Left ventricle myocardium inferior (tissue), 1 donor: ENCODE measurements at regions of chr20 and their contacts with region 1.

Region 1: GRCh38 chr20:57380081-57380881 is 10.9 kb upstream of the RBM38 start:
- DNase-seq: no peak
- H3K4me3 ChIP-seq: no peak overlapping the region
- H3K27ac ChIP-seq: no peak overlapping the region
- H3K4me1 ChIP-seq: peaks cover 19% of the 10 kb centered on the region
- H3K27me3 ChIP-seq: no peaks in the 10 kb centered on the region
- CTCF ChIP-seq: no peak

Region 2: DNA sequence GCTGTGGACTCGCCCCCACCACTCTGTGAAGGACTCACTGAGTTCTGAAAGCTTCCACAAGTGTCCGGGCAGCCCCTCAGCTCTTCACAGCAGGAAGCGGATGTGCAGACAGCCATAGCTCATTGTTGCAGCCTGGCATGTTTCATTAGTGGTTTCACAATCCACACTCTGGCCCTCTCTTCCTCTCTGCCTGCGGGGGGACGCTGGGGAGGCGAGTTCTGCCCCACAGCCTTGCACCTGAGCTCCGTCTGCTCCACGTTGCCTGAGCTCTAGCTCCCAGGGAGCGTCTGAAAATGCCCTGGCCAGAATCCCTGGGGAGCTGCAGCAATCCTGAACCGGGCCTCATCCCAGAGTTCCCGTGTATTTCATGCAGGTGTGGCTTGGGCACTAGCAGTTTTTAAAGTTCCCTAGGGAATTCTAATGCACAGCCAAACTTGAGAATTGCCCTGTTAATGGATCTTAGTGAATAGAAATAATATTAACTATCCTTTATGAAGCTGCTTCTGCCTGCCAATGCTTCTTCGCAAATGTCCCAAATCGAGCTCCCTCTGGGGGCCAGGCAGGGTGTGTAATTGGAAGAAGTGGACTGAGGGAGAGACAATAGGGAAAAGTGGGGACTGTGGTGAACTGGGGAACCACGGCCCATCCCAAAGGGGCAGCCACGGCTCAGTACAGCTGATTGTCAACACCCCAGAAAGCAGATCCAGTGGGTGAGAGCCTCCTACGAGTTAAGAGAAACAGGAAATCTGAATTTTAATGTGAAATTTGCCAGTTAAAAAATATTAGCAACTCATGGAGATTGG is 93.2 kb after region 1 on chr20:
- intact Hi-C with region 1: no loop called
- DNase-seq: no peak
- H3K4me3 ChIP-seq: no peak overlapping the region
- H3K27ac ChIP-seq: no peak overlapping the region
- H3K4me1 ChIP-seq: peaks cover 28% of the 10 kb centered on the region
- H3K27me3 ChIP-seq: peaks cover 20% of the 10 kb centered on the region
- CTCF ChIP-seq: no peak

Region 3: GRCh38 chr20:57495985-57496384 is 115.7 kb after region 1 on chr20:
- intact Hi-C with region 1: loop called (anchors 2 kb)
- DNase-seq: no peak
- H3K4me3 ChIP-seq: no peak overlapping the region
- H3K27ac ChIP-seq: no peak overlapping the region
- H3K4me1 ChIP-seq: peaks cover 19% of the 10 kb centered on the region
- H3K27me3 ChIP-seq: peaks cover 15% of the 10 kb centered on the region
- CTCF ChIP-seq: no peak